A549 (cell line): ENCODE measurements at regions of chr9 and their contacts with region 1.

Region 1: GRCh38 chr9:135602789-135603481 is 36.4 kb downstream of the GLT6D1 start:
- DNase-seq: peak; percentile 34 to 39
- ATAC-seq: peak; percentile 54 to 69; a peak in 4 of 6 replicates
- H3K4me3 ChIP-seq: no peak overlapping the region
- H3K27ac ChIP-seq: no peak overlapping the region
- H3K4me1 ChIP-seq: no peaks in the 10 kb centered on the region
- CTCF ChIP-seq: peak; percentile 57
- EP300 ChIP-seq: no peak
- POLR2A ChIP-seq: no peak
- RAD21 ChIP-seq: peak in 1 of 2 experiments; percentile 39; a peak in 2 of 5 replicates

Region 2: DNA sequence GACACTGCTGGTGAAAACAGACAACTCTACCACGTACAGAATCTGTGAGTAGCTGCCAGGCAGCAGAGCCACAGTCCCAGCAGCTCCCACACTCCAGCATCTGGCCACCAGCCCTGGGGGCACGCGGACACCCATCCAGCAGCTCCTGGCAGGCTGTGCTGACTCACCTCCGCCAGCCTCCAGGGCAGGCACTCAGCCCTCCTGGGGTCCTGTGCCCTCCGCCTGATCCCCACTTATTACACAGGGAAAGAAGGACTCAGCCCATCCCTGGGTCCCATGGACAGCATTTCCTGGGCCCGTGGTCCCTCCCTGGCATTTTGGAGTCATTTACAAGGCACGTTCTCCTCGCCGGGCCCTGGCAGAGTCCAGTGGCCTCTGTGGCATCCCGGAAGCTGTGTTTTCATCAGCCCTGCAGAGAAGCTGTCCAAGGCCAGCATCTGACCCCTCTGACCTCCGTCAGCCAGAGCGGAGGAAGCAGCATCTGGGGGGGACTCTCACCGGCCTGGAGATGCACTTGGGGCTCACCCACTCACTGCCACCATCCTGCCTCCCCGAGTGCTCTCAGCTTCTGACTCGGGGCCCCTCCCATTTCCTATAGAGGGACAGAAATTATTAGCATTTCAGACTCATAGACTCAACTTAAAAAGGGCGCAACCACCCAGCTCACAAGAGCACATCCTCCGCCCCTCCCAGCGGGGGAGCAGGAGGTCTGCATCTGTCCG is 19.8 kb before region 1 on chr9:
- CTCF ChIA-PET with region 1: interaction called, 11 read pairs
- POLR2A ChIA-PET with region 1: no interaction called
- DNase-seq: no peak
- ATAC-seq: no peak; a peak in 1 of 6 replicates
- H3K4me3 ChIP-seq: no peak overlapping the region
- H3K27ac ChIP-seq: no peak overlapping the region
- H3K4me1 ChIP-seq: no peaks in the 10 kb centered on the region
- CTCF ChIP-seq: no peak
- EP300 ChIP-seq: no peak
- POLR2A ChIP-seq: no peak
- RAD21 ChIP-seq: no peak

Region 3: DNA sequence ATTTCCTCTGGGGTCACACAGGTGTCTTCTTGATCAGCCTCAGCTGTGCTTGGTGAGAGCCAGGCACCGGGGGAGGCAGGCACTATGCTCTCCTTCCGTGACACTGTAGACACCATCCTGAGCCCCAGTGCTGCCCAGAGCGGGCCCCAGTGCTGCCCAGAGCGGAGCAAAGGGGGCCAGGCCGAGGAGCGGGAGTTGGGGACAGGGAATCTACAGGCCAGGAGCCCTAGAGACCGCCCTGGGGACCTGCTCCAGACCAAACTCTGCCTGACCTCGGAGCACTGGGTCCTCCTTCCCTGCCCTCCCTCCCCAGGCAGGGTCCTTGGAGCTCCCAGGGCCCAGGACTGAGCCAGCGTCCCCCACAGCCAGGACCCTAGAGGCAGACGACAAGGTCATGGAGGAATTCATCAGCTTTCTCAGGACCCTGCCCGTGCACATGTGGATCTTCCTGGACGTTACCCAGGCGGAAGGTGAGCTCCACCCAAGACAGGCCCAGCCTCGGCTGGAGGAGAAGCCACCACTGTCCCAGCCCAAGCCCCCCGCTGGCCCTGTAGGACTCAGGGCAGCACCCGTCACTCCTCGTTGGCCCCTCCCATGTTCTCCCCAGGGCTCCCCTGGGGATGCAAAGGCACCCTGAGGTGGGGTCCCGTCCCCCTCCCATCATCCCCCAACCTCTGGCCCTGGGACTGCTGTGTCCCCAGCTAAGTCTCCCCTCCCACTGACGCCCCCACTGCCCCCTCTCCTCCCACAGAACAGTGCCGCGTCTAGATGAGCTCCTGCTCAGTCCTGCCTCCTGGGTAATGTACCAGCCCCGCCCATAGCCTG is 11.2 kb before region 1 on chr9:
- CTCF ChIA-PET with region 1: interaction called, 21 read pairs
- POLR2A ChIA-PET with region 1: no interaction called
- DNase-seq: no peak
- ATAC-seq: no peak; a peak in 1 of 6 replicates
- H3K4me3 ChIP-seq: no peak overlapping the region
- H3K27ac ChIP-seq: no peak overlapping the region
- H3K4me1 ChIP-seq: no peaks in the 10 kb centered on the region
- CTCF ChIP-seq: no peak
- EP300 ChIP-seq: no peak
- POLR2A ChIP-seq: no peak
- RAD21 ChIP-seq: no peak

Region 4: GRCh38 chr9:135615666-135616618 is 13.0 kb after region 1 on chr9:
- CTCF ChIA-PET with region 1: interaction called, 55 read pairs
- POLR2A ChIA-PET with region 1: no interaction called
- DNase-seq: no peak
- ATAC-seq: peak; percentile 34 to 71; a peak in 4 of 6 replicates
- H3K4me3 ChIP-seq: no peak overlapping the region
- H3K27ac ChIP-seq: no peak overlapping the region
- H3K4me1 ChIP-seq: no peaks in the 10 kb centered on the region
- CTCF ChIP-seq: 0 out of 3 replicates have a peak, but pooled peaks have one; percentile 7
- EP300 ChIP-seq: no peak
- POLR2A ChIP-seq: no peak
- RAD21 ChIP-seq: no peak